Head of caudate nucleus (tissue), 42 donors: ENCODE measurements at regions of chr6 and their contacts with region 1.

Region 1: GRCh38 chr6:17086469-17086868 is 15.4 kb upstream of the STMND1 start:
- DNase-seq: peak in 40 of 42 donors; percentile 24 to 89 (median 68)

Region 2: GRCh38 chr6:16964553-16965501 is 121.6 kb before region 1 on chr6:
- intact Hi-C with region 1: loop called (anchors 10 kb)
- DNase-seq: peak; percentile 72 to 92 (median 82)

Region 3: DNA sequence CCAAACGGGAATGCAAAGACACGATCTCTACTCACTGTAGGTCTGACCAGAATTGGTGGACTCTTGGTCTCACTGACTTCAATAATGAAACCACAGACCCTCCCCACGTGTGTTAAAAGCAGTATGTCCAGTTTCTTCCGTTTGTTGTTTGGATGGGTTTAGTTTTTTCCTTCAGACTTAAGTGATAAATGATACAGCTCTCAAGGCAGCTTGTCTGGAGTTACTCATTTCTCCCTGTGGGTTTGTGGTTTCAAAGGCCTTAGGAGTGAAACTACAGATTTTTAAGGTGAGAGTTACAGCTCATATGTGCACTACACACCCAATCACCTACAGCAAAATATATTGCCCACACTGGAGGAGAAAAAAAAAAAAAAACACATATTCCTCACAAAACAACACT is 71.3 kb before region 1 on chr6:
- intact Hi-C with region 1: loop called (anchors 10 kb)
- DNase-seq: no peak